GM13976 (cell line): ENCODE measurements at regions of chrX and their contacts with region 1.

Region 1: DNA sequence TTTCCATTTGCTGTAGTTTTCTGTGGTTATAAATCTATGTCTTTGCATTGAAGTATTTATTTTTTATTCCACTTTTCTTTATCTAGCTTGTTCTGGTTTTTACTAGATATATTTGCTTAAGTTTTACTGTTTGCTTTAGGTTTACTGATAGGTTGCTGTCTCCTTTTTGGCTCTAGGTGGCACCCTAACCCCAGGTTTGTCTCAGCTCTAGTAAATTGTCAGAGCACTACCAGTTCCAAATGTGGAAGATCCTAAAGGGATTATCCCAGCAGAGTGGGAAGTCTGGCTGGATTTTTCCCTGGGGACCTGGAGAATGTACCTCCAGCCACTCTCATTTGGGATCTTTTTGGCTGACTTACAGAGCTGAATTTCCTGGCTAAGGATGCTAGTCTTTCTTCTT is 106.1 kb downstream of the PBDC1 start:
- DNase-seq: peak; percentile 35
- CTCF ChIP-seq: peak; percentile 42

Region 2: GRCh38 chrX:76454456-76454927 is 175.5 kb after region 1 on chrX:
- in situ Hi-C with region 1: loop called (anchors 10 kb)
- DNase-seq: peak; percentile 2
- CTCF ChIP-seq: peak; percentile 58

Region 3: GRCh38 chrX:77431227-77431626 is 1152.2 kb after region 1 on chrX:
- in situ Hi-C with region 1: no loop called
- DNase-seq: no peak
- CTCF ChIP-seq: no peak